Vagina (tissue), 2 donors: ENCODE measurements at regions of chr12 and their contacts with region 1.

Region 1: DNA sequence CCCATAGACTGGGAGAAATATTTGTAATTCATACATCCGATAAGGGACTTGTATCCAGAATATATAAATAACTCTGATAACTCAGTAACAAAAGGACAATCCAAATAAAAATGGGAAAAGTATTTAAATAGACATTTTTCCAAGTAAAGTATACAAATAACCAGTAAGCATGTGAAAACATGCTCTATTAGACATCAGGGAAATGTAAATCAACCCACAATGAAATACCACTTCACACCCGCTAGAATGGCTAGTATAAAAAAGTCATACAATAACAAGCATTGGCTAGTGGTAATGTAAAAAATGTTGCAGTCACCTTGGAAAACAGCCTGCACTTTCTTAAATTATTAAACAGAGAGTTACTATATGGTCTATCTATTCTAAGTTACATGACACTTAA is 650.7 kb downstream of the C12orf50 start:
- DNase-seq: no peak
- H3K4me3 ChIP-seq: no peak overlapping the region
- H3K27ac ChIP-seq: no peak overlapping the region
- H3K4me1 ChIP-seq: no peaks in the 10 kb centered on the region
- H3K27me3 ChIP-seq: no peaks in the 10 kb centered on the region
- CTCF ChIP-seq: no peak
- POLR2A ChIP-seq: no peak

Region 2: DNA sequence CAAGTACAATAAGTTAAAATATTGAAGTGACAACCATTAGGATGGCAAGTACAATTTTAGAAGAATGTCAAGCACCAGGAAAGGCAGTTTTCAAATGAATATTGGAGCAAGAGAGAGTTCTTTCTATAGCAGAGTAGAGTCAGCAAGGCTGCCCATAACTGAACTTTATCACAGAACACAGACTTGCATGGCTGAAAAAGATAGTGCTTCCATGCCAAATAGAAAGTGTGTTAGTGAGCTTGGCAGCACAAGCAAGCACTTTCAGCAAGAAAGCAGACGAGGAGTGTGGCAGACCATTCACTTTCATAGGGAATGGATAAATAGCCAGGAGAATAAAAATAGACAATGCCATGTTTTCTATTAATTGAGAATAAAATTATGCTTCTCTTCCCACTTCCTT is 475.4 kb before region 1 on chr12:
- intact Hi-C with region 1: loop called (anchors 5 kb)
- DNase-seq: no peak
- H3K4me3 ChIP-seq: no peak overlapping the region
- H3K27ac ChIP-seq: no peak overlapping the region
- H3K4me1 ChIP-seq: no peaks in the 10 kb centered on the region
- H3K27me3 ChIP-seq: no peaks in the 10 kb centered on the region
- CTCF ChIP-seq: no peak
- POLR2A ChIP-seq: no peak

Region 3: GRCh38 chr12:87728931-87729593 is 350.5 kb after region 1 on chr12:
- intact Hi-C with region 1: no loop called
- DNase-seq: no peak
- H3K4me3 ChIP-seq: no peak overlapping the region
- H3K27ac ChIP-seq: no peak overlapping the region
- H3K4me1 ChIP-seq: no peaks in the 10 kb centered on the region
- H3K27me3 ChIP-seq: no peaks in the 10 kb centered on the region
- CTCF ChIP-seq: no peak
- POLR2A ChIP-seq: no peak